PC-3 (cell line): ENCODE measurements at regions of chr17 and their contacts with region 1.

Region 1: DNA sequence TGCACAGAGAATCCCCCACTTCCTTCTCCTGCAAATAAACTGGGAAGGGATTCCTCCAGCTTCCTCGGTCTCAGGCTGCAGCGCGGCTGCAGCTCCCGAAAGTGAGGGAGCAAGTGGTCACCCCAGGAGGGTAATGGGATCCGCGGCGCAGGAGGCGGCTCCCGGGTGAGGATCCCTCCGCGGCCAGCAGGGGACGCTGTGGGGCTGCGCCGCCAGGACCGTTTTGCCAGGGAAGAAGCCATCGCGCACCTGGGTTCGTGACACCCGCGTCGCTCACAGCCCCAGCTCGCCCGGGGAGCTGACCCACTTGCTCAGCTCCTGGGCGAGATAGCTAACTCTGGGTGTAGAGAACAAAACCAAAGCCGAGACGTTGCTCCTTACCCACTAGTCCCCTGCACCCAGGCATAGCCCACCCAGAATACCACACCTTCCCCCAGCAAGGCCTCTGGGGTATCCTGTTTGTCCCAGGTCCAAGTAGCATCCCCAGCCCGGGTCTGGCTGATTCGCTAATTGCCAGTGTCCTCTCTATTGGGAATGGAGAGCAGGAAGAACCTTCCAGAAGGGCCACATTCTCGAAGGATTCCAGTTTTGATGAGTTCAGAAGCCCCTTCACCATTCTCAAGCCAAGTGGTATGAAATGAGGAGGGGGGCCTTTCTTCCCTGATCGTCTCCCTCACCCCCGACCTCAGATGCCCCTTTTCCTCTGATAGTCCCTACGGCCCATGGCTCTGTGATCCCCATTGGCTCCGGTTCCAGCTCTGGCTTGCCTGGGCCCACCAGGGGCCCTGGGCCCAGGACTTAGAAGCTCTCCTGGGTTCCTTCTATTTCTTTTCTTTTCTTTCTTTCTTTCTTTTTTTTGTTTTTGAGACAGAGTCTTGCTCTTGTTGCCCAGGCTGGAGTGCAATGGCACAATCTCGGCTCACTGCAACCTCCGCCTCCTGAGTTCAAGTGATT is 14.1 kb downstream of the CYGB start:
- DNase-seq: peak; percentile 88
- ATAC-seq: peak; percentile 53
- H3K4me3 ChIP-seq: peak overlapping the region; percentile 46; the same call in 1 of the 2 replicates
- H3K27ac ChIP-seq: no peak overlapping the region
- H3K4me1 ChIP-seq: peaks cover 30% of the 10 kb centered on the region
- H3K27me3 ChIP-seq: no peaks in the 10 kb centered on the region
- CTCF ChIP-seq: peak; percentile 99

Region 2: DNA sequence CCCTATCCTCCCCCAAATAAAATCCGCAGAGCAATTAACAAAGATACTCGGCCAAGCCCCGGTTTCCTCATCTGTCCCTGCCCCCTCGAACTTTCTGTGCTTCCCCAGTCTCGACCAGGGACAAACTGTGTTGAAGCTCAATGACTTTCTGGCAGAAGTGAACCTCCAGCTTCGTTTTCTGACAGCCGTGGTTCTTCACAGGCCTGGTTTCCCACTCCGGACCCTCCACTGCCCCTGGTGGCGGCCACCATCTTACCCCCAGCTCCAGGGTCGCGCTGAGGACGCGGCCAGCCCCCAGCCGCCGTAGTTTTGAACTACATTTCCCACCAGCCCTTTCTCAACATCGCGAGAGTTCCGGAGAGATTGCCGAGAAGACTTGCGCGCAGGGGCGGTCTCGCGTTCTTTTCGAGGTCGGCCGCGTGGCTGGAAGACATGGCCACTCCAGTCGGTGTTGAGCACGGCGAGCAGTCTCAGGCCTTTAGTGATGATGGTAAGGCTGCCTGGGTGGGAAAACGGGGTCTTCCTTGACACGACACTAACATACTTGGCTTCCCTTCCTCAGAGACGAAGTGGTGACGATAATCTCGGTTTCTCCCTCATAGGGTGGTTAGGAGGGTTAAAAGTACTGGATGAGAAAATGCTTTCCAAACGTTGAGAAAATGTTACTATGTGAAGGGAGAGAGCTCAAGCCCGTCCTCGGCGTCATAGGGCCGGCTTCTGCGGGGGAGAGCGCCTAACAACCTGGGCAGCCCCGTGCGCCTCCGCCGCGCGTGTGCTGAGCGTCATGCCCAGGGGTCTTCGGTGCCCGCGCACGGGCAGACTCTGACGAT is 34.2 kb after region 1 on chr17:
- CTCF ChIA-PET with region 1: interaction called, 12 read pairs
- POLR2A ChIA-PET with region 1: interaction called, 3 read pairs
- intact Hi-C with region 1: no loop called
- DNase-seq: peak; percentile 99
- ATAC-seq: peak; percentile 84
- H3K4me3 ChIP-seq: peak overlapping the region; percentile 91
- H3K27ac ChIP-seq: peak overlapping the region; percentile 82
- H3K4me1 ChIP-seq: peaks cover 42% of the 10 kb centered on the region
- H3K27me3 ChIP-seq: no peaks in the 10 kb centered on the region
- CTCF ChIP-seq: peak; percentile 56

Region 3: DNA sequence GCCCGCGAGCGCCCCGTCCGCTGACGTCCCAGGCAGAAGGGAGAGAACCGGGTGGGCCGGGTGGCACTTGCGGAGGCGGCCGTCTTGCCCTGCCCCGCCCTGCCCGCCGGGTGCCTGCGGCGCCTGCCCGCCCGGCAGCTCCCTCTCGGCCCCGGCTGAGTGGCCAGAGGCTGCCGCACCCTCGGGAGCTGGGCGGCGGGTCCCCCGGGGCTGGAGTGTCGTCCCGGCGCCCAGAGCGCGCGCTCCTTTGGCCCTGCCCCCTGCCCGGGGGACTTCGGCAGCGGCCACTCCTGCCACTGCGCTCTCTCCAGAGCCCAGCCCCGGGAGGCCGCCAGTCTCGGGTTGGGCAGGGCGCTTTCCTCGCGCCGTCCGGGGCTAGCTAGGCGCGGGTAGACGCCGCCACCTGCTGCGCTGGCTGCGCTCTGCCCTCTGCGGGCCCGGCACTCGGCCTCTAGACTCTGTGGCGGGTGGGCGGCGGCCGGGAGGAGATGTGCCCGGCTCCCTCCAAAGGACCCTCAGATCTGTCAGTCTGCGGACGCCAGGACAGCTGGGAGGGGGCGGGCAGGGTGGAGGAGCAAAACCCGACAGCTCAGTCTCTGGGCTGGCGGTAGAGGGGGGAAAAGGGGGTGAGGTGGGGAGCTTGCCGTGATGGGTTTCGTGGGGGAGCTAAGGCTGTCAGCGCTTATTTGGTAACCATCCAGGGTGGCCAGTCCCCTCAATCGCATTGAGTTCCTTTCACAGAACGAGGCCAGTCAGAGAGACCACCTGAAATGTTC is 62.6 kb after region 1 on chr17 and contains the start of gene ST6GALNAC2:
- CTCF ChIA-PET with region 1: interaction called, 11 read pairs
- POLR2A ChIA-PET with region 1: no interaction called
- intact Hi-C with region 1: no loop called
- DNase-seq: peak; percentile 84
- ATAC-seq: peak; percentile 94
- H3K4me3 ChIP-seq: peak within 1 kb of the TSS; percentile 80
- H3K27ac ChIP-seq: no peak within 1 kb of the TSS
- H3K4me1 ChIP-seq: 0 out of 2 replicates have a peak, but pooled peaks cover 4% of the 10 kb centered on the region
- H3K27me3 ChIP-seq: no peaks in the 10 kb centered on the region
- CTCF ChIP-seq: peak; percentile 60
- total RNA-seq, gene ST6GALNAC2: 1.0 and 6.4 TPM in 2 replicates

Region 4: GRCh38 chr17:76599694-76600478 is 76.5 kb after region 1 on chr17:
- CTCF ChIA-PET with region 1: no interaction called
- POLR2A ChIA-PET with region 1: no interaction called
- intact Hi-C with region 1: no loop called
- DNase-seq: no peak
- ATAC-seq: no peak
- H3K4me3 ChIP-seq: no peak overlapping the region
- H3K27ac ChIP-seq: no peak overlapping the region
- H3K4me1 ChIP-seq: peaks cover 39% of the 10 kb centered on the region
- H3K27me3 ChIP-seq: no peaks in the 10 kb centered on the region
- CTCF ChIP-seq: no peak

Region 5: DNA sequence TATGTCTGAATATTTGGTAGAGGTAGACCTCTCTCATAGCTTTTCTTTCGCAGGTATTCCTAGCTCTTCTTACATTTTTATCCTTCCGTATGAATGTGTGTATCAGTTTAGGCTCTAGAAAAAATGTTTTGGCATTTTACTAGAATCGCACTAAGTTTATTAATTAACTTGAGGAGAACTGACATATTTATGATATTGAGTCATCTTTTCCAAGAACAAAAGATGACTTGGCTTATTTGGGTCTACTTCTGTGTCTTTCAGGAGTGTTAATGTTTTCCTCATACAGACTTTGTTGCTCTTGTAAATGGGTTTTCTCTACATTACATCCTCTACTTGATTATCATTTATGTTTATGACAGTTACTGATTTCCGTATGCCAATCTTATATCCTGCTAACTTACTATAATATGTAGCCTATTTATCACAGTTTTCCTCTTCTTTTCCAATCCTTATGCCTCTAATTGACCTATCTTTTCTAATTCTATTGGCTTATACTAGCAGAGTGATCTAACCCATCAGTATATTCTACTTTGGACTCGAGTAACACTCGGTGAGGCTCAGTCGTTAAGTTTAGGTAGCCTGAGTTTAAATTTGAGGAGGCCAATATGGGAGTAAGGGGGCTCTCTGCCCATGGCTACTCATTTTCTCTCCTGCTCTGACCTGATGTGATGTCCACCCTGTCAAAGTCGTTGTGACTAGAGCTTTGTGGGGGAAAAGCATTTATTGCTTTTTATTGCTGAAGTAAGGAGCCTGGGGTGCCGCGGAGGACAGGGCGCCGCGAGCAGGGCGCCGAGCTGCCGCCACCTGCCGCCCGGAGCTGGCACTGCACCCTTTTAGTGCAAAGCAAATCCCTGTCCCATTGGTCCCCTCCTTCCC is 100.1 kb after region 1 on chr17:
- CTCF ChIA-PET with region 1: interaction called, 5 read pairs
- POLR2A ChIA-PET with region 1: no interaction called
- intact Hi-C with region 1: loop called (anchors 1 kb)
- DNase-seq: peak; percentile 83
- ATAC-seq: peak; percentile 94
- H3K4me3 ChIP-seq: peak overlapping the region; percentile 6; the same call in 1 of the 2 replicates
- H3K27ac ChIP-seq: no peak overlapping the region
- H3K4me1 ChIP-seq: peaks cover 9% of the 10 kb centered on the region
- H3K27me3 ChIP-seq: no peaks in the 10 kb centered on the region
- CTCF ChIP-seq: peak; percentile 95

Region 6: GRCh38 chr17:76641501-76641900 is 118.1 kb after region 1 on chr17:
- CTCF ChIA-PET with region 1: no interaction called
- POLR2A ChIA-PET with region 1: no interaction called
- intact Hi-C with region 1: no loop called
- DNase-seq: peak; percentile 98
- ATAC-seq: peak; percentile 88
- H3K4me3 ChIP-seq: no peak overlapping the region
- H3K27ac ChIP-seq: 0 out of 2 replicates have a peak overlapping the region, but pooled peaks have one; percentile 1
- H3K4me1 ChIP-seq: peaks cover 28% of the 10 kb centered on the region
- H3K27me3 ChIP-seq: no peaks in the 10 kb centered on the region
- CTCF ChIP-seq: no peak

Region 7: GRCh38 chr17:76714822-76715495 is 191.6 kb after region 1 on chr17:
- CTCF ChIA-PET with region 1: no interaction called
- POLR2A ChIA-PET with region 1: no interaction called
- intact Hi-C with region 1: loop called (anchors 2 kb)
- DNase-seq: peak; percentile 87
- ATAC-seq: peak; percentile 11
- H3K4me3 ChIP-seq: no peak overlapping the region
- H3K27ac ChIP-seq: no peak overlapping the region
- H3K4me1 ChIP-seq: peaks cover 11% of the 10 kb centered on the region
- H3K27me3 ChIP-seq: no peaks in the 10 kb centered on the region
- CTCF ChIP-seq: peak; percentile 96